ENCODE measurements at regions of chr14 and their contacts with region 1.

Region 1: DNA sequence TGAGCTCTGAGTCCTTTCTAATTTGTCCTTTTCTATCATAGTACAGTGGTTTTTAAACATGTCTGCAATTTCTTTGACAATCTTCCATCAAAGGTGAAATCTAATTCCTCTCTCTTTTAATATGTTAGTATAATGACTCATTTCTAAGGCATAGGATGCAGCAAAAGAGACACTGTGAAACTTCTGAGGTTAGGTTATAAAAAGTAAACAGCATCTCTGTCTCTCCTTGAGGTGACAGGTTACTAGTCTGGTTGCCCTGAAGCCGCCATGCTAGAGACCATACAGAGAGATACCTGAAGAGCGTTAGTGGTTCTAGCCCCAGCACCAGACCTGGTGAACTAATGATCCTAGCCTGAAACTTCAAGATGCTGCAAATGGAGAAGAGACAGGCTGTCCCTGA is 114.3 kb downstream of the PPM1A start:
- DNase-seq: peak; percentile 96
- ATAC-seq: peak; percentile 96
- H3K4me3 ChIP-seq: no peak overlapping the region
- H3K27ac ChIP-seq: no peak overlapping the region
- H3K4me1 ChIP-seq: peaks cover 14% of the 10 kb centered on the region
- H3K27me3 ChIP-seq: no peaks in the 10 kb centered on the region
- CTCF ChIP-seq: no peak

Region 2: GRCh38 chr14:60294411-60295069 is 68.7 kb before region 1 on chr14:
- CTCF ChIA-PET with region 1: no interaction called
- POLR2A ChIA-PET with region 1: no interaction called
- intact Hi-C with region 1: no loop called
- DNase-seq: peak; percentile 68
- ATAC-seq: peak; percentile 98
- H3K4me3 ChIP-seq: no peak overlapping the region
- H3K27ac ChIP-seq: no peak overlapping the region
- H3K4me1 ChIP-seq: peaks cover 10% of the 10 kb centered on the region
- H3K27me3 ChIP-seq: no peaks in the 10 kb centered on the region
- CTCF ChIP-seq: no peak

Region 3: GRCh38 chr14:60327447-60328331 is 35.6 kb before region 1 on chr14:
- CTCF ChIA-PET with region 1: no interaction called
- POLR2A ChIA-PET with region 1: no interaction called
- intact Hi-C with region 1: no loop called
- DNase-seq: peak; percentile 47
- ATAC-seq: peak; percentile 43
- H3K4me3 ChIP-seq: peak overlapping the region; percentile 52
- H3K27ac ChIP-seq: no peak overlapping the region
- H3K4me1 ChIP-seq: no peaks in the 10 kb centered on the region
- H3K27me3 ChIP-seq: peaks cover 26% of the 10 kb centered on the region
- CTCF ChIP-seq: 0 out of 2 replicates have a peak, but pooled peaks have one; percentile 36

Region 4: DNA sequence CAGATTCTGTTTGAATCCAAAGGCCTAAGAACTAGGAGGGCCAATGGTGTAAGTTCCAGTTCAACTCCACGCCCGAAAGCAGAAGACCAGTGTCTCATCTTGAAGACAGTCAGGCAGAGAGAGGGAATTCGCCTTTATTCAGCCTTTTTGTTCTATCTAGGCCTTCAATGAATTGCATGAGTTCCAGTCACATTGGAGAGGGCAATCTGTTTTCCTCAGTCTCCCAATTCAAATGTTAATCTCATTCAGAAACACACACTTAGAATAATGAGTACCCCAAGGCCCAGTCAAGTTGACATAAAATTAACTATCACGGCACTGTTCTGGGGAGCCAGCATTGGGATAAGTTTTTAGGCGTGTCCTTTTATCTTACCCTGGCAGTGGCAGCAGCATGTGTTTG is 56.8 kb after region 1 on chr14:
- CTCF ChIA-PET with region 1: no interaction called
- POLR2A ChIA-PET with region 1: no interaction called
- intact Hi-C with region 1: loop called (anchors 5 kb)
- DNase-seq: no peak
- ATAC-seq: no peak
- H3K4me3 ChIP-seq: no peak overlapping the region
- H3K27ac ChIP-seq: no peak overlapping the region
- H3K4me1 ChIP-seq: peaks cover 4% of the 10 kb centered on the region
- H3K27me3 ChIP-seq: no peaks in the 10 kb centered on the region
- CTCF ChIP-seq: no peak

Measured in PC-3 (cell line).